ENCODE measurements at regions of chr5 and their contacts with region 1.

Region 1: DNA sequence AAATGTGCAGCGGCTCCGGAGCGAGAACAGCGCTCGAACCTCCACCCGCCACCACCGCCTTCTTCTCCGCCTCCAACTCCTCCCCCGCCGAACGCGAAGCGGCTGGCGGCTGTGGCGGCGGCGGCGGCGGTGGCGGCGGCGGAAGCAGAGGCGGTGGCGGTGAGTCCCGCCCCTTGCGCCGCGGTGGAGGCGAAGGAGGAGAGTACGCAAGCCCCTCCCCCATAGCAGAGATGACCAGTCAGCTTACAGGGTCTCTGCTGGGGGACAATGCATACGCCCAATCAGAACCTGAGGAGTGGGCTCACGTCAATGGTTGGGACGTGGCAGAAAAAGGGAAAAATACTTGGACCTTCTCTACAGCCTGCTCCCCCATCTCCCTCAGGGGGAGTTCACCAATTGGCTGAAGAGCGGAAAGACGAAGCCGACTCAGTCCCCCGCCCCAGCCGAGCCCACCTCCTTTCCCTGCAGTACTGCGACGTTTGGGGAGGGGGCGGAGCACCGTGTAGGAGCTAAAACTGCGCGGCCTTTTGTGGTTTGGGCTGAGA is at the start of gene PJA2:
- DNase-seq: peak; percentile 94 to 98 (median 98)
- ATAC-seq: peak; percentile 88
- H3K4me3 ChIP-seq: peak within 1 kb of the TSS; percentile 77
- H3K4me3 Mint-ChIP-seq: peak within 1 kb of the TSS; percentile 89 to 100 (median 98)
- H3K27ac ChIP-seq: peak within 1 kb of the TSS; percentile 99
- H3K27ac Mint-ChIP-seq: peak within 1 kb of the TSS; percentile 97 to 100 (median 99)
- H3K4me1 ChIP-seq: peaks cover 8 to 19% of the 10 kb centered on the region in 2 donors
- H3K4me1 Mint-ChIP-seq: peaks cover 24 to 50% (median 42%) of the 10 kb centered on the region in 7 donors
- H3K27me3 ChIP-seq: no peaks in the 10 kb centered on the region
- H3K27me3 Mint-ChIP-seq: peaks cover 0 to 2% (median 0%) of the 10 kb centered on the region in 5 donors
- total RNA-seq, gene PJA2: 59.9 to 89.9 (median 76.2) TPM

Region 2: GRCh38 chr5:108748401-108749127 is 661.4 kb before region 1 on chr5:
- CTCF ChIA-PET with region 1: no interaction called
- POLR2A ChIA-PET with region 1: interaction called, 11 read pairs
- intact Hi-C with region 1: loop called (anchors 1 kb)
- DNase-seq: peak; percentile 92 to 99 (median 98)
- ATAC-seq: peak; percentile 94
- H3K4me3 ChIP-seq: peak overlapping the region; percentile 91
- H3K4me3 Mint-ChIP-seq: peak overlapping the region; percentile 83 to 100 (median 93)
- H3K27ac ChIP-seq: peak overlapping the region; percentile 94
- H3K27ac Mint-ChIP-seq: peak overlapping the region; percentile 78 to 98 (median 93)
- H3K4me1 ChIP-seq: peaks cover 10 to 12% of the 10 kb centered on the region in 2 donors
- H3K4me1 Mint-ChIP-seq: peaks cover 9 to 26% (median 13%) of the 10 kb centered on the region in 7 donors
- H3K27me3 ChIP-seq: no peaks in the 10 kb centered on the region
- H3K27me3 Mint-ChIP-seq: peaks cover 0 to 52% (median 0%) of the 10 kb centered on the region in 5 donors

Region 3: GRCh38 chr5:109374625-109375024 is 35.3 kb before region 1 on chr5:
- CTCF ChIA-PET with region 1: no interaction called
- POLR2A ChIA-PET with region 1: interaction called, 9 read pairs
- intact Hi-C with region 1: loop called (anchors 1 to 2 kb)
- DNase-seq: peak in 3 of 9 donors; percentile 5 to 13 (median 9)
- ATAC-seq: no peak
- H3K4me3 ChIP-seq: no peak overlapping the region
- H3K4me3 Mint-ChIP-seq: no peak overlapping the region
- H3K27ac ChIP-seq: no peak overlapping the region
- H3K27ac Mint-ChIP-seq: peak overlapping the region in 3 of 9 donors; percentile 45 to 58 (median 45)
- H3K4me1 ChIP-seq: peaks cover 0 to 3% of the 10 kb centered on the region in 2 donors
- H3K4me1 Mint-ChIP-seq: peaks cover 20 to 82% (median 71%) of the 10 kb centered on the region in 7 donors
- H3K27me3 ChIP-seq: no peaks in the 10 kb centered on the region
- H3K27me3 Mint-ChIP-seq: no peaks in the 10 kb centered on the region

Region 4: GRCh38 chr5:109439590-109439989 is 29.7 kb after region 1 on chr5:
- CTCF ChIA-PET with region 1: no interaction called
- POLR2A ChIA-PET with region 1: interaction called, 5 read pairs
- intact Hi-C with region 1: loop called (anchors 1 to 2 kb)
- DNase-seq: no peak
- ATAC-seq: no peak
- H3K4me3 ChIP-seq: no peak overlapping the region
- H3K4me3 Mint-ChIP-seq: no peak overlapping the region
- H3K27ac ChIP-seq: no peak overlapping the region
- H3K27ac Mint-ChIP-seq: no peak overlapping the region
- H3K4me1 ChIP-seq: no peaks in the 10 kb centered on the region
- H3K4me1 Mint-ChIP-seq: no peaks in the 10 kb centered on the region
- H3K27me3 ChIP-seq: no peaks in the 10 kb centered on the region
- H3K27me3 Mint-ChIP-seq: peaks cover 0 to 9% (median 0%) of the 10 kb centered on the region in 5 donors

Region 5: GRCh38 chr5:110054240-110054639 is 644.3 kb after region 1 on chr5:
- CTCF ChIA-PET with region 1: no interaction called
- POLR2A ChIA-PET with region 1: interaction called, 5 read pairs
- intact Hi-C with region 1: loop called (anchors 2 to 10 kb)
- DNase-seq: peak; percentile 17 to 93 (median 85)
- ATAC-seq: peak; percentile 89
- H3K4me3 ChIP-seq: peak overlapping the region; percentile 6
- H3K4me3 Mint-ChIP-seq: peak overlapping the region; percentile 50 to 86 (median 65)
- H3K27ac ChIP-seq: peak overlapping the region; percentile 63
- H3K27ac Mint-ChIP-seq: peak overlapping the region; percentile 77 to 96 (median 90)
- H3K4me1 ChIP-seq: peaks cover 21 to 35% of the 10 kb centered on the region in 2 donors
- H3K4me1 Mint-ChIP-seq: peaks cover 10 to 50% (median 35%) of the 10 kb centered on the region in 7 donors
- H3K27me3 ChIP-seq: no peaks in the 10 kb centered on the region
- H3K27me3 Mint-ChIP-seq: no peaks in the 10 kb centered on the region

Region 6: DNA sequence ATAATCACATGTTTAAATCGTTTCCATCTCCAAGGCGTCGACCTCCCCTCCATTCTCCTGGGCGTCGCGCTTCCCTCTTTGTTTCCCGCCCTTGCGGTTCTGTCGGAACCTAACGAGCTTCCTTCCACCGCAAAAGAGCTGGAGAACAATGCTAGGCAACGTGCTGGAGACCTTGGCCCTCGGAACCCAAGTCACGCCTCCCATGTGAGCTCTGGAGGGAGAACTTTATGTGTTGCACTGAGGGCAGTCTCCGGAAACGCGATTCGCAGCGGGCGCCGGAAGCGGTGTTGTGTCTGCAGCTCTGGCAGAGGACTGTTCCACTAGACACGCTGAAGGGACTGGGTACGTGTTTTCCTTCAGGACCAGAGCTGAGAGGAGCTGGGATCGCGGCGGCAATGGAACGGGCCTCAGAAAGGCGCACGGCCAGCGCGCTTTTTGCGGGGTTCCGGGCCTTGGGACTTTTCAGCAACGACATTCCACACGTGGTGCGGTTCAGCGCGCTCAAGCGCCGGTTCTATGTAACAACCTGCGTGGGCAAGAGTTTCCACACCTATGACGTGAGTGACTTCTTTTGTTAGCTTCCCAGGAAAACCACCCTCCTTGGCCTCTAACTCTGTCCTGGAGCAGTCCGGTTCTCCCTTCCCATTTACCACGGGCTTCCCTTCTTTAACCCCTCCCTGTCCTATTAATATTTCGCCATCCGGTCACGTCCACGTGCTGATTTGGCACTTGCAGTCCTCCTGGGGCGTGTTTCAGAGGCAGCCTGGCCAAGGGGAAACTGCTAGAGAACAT is 1682.3 kb after region 1 on chr5 and contains the start of gene WDR36:
- CTCF ChIA-PET with region 1: no interaction called
- POLR2A ChIA-PET with region 1: no interaction called
- intact Hi-C with region 1: loop called in 1 of 2 experiments (anchors 5 kb)
- DNase-seq: peak; percentile 80 to 95 (median 87)
- ATAC-seq: peak; percentile 99
- H3K4me3 ChIP-seq: peak within 1 kb of the TSS; percentile 88
- H3K4me3 Mint-ChIP-seq: peak within 1 kb of the TSS; percentile 91 to 99 (median 98)
- H3K27ac ChIP-seq: peak within 1 kb of the TSS; percentile 82
- H3K27ac Mint-ChIP-seq: peak within 1 kb of the TSS; percentile 66 to 98 (median 94)
- H3K4me1 ChIP-seq: peaks cover 11 to 20% of the 10 kb centered on the region in 2 donors
- H3K4me1 Mint-ChIP-seq: peaks cover 22 to 49% (median 39%) of the 10 kb centered on the region in 7 donors
- H3K27me3 ChIP-seq: no peaks in the 10 kb centered on the region
- H3K27me3 Mint-ChIP-seq: peaks cover 0 to 12% (median 5%) of the 10 kb centered on the region in 5 donors
- total RNA-seq, gene WDR36: 24.8 to 37.4 (median 29.7) TPM

Measured in naive thymus-derived CD4-positive, alpha-beta T cell (primary cell).